CD14-positive monocyte (primary cell): ENCODE measurements at regions of chr13 and their contacts with region 1.

Region 1: GRCh38 chr13:102580552-102581169 is 16.1 kb upstream of the TPP2 start:
- DNase-seq: peak; percentile 46 to 73 (median 57)
- H3K4me3 ChIP-seq: no peak overlapping the region
- H3K4me3 Mint-ChIP-seq: no peak overlapping the region
- H3K27ac ChIP-seq: no peak overlapping the region
- H3K27ac Mint-ChIP-seq: no peak overlapping the region
- H3K4me1 ChIP-seq: peaks cover 15 to 16% of the 10 kb centered on the region in 2 donors
- H3K4me1 Mint-ChIP-seq: peaks cover 16% of the 10 kb centered on the region
- H3K27me3 ChIP-seq: no peaks in the 10 kb centered on the region
- H3K27me3 Mint-ChIP-seq: peaks cover 0 to 4% (median 0%) of the 10 kb centered on the region in 3 donors
- CTCF ChIP-seq: peak; percentile 88

Region 2: GRCh38 chr13:100674848-100675660 is 1905.6 kb before region 1 on chr13:
- intact Hi-C with region 1: loop called in 1 of 2 experiments (anchors 10 kb)
- DNase-seq: peak; percentile 95 to 96 (median 96)
- H3K4me3 ChIP-seq: peak overlapping the region; percentile 76 to 94 (median 83)
- H3K4me3 Mint-ChIP-seq: peak overlapping the region; percentile 94 to 95
- H3K27ac ChIP-seq: peak overlapping the region in 1 of 2 donors; percentile 68
- H3K27ac Mint-ChIP-seq: peak overlapping the region in 5 of 7 donors; percentile 26 to 84 (median 35)
- H3K4me1 ChIP-seq: peaks cover 19 to 22% of the 10 kb centered on the region in 2 donors
- H3K4me1 Mint-ChIP-seq: peaks cover 30% of the 10 kb centered on the region
- H3K27me3 ChIP-seq: peaks cover 6 to 12% of the 10 kb centered on the region in 2 donors
- H3K27me3 Mint-ChIP-seq: peaks cover 7 to 19% (median 16%) of the 10 kb centered on the region in 3 donors
- CTCF ChIP-seq: peak; percentile 19

Region 3: DNA sequence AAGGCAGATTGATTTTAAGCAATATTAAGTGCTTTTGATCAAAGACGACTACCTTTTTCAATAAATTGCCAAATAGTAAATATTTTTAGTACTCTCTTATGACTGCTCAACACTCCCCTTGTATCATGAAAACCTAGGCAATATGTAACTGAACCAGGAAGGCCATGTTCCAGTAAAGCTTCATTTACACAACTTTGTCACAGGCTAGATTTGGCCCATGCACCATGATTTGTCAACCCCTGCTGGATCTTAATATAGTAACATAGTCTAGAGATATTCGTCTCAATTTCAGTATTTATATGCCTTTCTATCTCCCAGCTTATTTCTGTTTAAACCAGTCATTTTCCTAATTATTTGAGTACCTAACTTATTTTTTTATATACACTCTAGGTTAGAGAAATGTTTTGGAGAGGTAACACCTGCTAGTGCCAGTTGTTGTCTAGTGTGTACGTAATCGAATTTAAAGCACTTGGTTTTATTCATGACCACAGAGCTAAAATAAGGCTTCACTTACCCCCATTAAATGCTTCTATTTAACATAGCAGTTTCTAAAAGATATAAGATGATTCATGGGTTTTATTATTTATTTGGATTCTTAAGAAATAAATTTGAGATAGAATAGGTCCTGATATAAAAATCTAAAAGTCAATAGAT is 37.2 kb after region 1 on chr13:
- intact Hi-C with region 1: loop called in 1 of 2 experiments (anchors 5 kb)
- DNase-seq: no peak
- H3K4me3 ChIP-seq: no peak overlapping the region
- H3K4me3 Mint-ChIP-seq: no peak overlapping the region
- H3K27ac ChIP-seq: peak overlapping the region in 1 of 2 donors; percentile 4
- H3K27ac Mint-ChIP-seq: no peak overlapping the region
- H3K4me1 ChIP-seq: no peaks in the 10 kb centered on the region
- H3K4me1 Mint-ChIP-seq: no peaks in the 10 kb centered on the region
- H3K27me3 ChIP-seq: no peaks in the 10 kb centered on the region
- H3K27me3 Mint-ChIP-seq: no peaks in the 10 kb centered on the region
- CTCF ChIP-seq: no peak

Region 4: DNA sequence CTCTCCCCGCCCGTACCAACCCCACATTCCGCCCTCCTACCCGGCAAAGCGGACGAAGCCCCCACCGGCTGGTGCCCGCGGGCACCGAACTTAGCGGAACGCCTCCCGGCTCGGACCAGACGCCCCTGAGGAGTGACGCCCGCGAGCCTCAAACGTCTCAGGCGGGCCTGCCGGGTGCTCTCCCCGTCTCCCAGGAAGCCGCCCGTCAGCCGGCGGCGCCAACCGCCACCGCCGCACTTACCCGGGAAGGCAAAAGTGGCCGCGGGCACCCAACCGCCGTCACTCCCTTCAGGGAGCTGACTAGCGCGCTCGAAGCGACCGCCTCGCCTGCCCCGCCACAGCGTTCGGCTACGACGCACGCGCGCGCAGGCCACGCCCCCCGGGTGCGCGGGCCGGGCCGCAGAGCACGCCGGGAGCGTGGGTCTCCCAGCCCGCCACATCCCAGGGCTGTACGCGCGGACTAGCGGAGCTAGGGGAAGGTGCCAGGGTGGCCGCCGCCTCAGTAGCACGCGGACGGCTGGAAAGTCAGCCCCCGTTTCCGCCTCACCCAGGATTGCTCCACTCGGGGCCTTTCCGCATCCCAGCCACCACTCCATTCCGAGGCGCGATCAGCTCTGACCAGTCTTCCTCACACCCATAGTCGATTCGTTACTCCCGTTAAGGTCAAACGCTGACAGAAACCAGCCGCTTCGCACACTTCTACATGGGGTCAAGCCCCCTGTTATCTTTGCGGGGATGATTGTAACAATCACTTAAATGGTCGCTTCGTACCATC is 193.0 kb after region 1 on chr13 and contains the start of gene TEX30:
- intact Hi-C with region 1: loop called in 1 of 2 experiments (anchors 10 kb)
- DNase-seq: peak; percentile 78 to 83 (median 82)
- H3K4me3 ChIP-seq: peak within 1 kb of the TSS; percentile 61 to 81 (median 78)
- H3K4me3 Mint-ChIP-seq: peak within 1 kb of the TSS; percentile 97
- H3K27ac ChIP-seq: peak within 1 kb of the TSS; percentile 27 to 69
- H3K27ac Mint-ChIP-seq: peak within 1 kb of the TSS; percentile 57 to 93 (median 89)
- H3K4me1 ChIP-seq: peaks cover 25 to 29% of the 10 kb centered on the region in 2 donors
- H3K4me1 Mint-ChIP-seq: peaks cover 34% of the 10 kb centered on the region
- H3K27me3 ChIP-seq: no peaks in the 10 kb centered on the region
- H3K27me3 Mint-ChIP-seq: peaks cover 0 to 5% (median 5%) of the 10 kb centered on the region in 3 donors
- CTCF ChIP-seq: no peak
- polyA plus RNA-seq, gene TEX30: 2.7 to 11.3 (median 10.9) TPM

Region 5: DNA sequence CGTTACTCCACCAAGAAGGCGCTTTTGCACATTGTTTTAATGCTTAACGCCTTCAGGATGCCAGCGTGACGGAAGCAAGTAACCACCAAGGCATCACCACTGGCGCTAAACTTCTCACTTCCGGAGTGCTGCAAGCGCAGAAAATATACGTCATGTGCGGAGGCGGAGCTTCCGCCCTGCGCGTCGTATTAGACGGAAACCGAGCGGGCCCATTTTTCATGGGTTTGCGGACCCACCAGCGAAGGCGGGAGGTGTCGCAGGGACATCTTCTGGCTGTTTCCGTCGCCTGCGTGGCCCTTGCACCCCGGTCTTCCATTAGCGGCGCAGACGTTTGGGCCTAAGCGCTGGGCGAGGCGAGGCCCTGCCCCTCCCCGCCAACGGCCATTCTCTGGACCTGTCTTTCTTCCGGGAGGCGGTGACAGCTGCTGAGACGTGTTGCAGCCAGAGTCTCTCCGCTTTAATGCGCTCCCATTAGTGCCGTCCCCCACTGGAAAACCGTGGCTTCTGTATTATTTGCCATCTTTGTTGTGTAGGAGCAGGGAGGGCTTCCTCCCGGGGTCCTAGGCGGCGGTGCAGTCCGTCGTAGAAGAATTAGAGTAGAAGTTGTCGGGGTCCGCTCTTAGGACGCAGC is 265.1 kb after region 1 on chr13 and contains the start of gene ERCC5:
- intact Hi-C with region 1: loop called (anchors 2 to 5 kb)
- DNase-seq: peak; percentile 94 to 97 (median 95)
- H3K4me3 ChIP-seq: peak within 1 kb of the TSS; percentile 72 to 97 (median 91)
- H3K4me3 Mint-ChIP-seq: peak within 1 kb of the TSS; percentile 92 to 93
- H3K27ac ChIP-seq: peak within 1 kb of the TSS; percentile 97 to 98
- H3K27ac Mint-ChIP-seq: peak within 1 kb of the TSS; percentile 96 to 99 (median 98)
- H3K4me1 ChIP-seq: peaks cover 15 to 22% of the 10 kb centered on the region in 2 donors
- H3K4me1 Mint-ChIP-seq: peaks cover 21% of the 10 kb centered on the region
- H3K27me3 ChIP-seq: no peaks in the 10 kb centered on the region
- H3K27me3 Mint-ChIP-seq: peaks cover 0 to 3% (median 0%) of the 10 kb centered on the region in 3 donors
- CTCF ChIP-seq: no peak
- polyA plus RNA-seq, gene ERCC5: 15.2 to 34.2 (median 22.1) TPM